Endothelial cell of umbilical vein (primary cell): ENCODE measurements at regions of chr2 and their contacts with region 1.

Region 1: GRCh38 chr2:35503715-35504180 is 851.8 kb upstream of the CRIM1 start:
- DNase-seq: peak; percentile 96
- H3K4me3 ChIP-seq: peak overlapping the region in 1 of 3 experiments; percentile 59
- H3K27ac ChIP-seq: peak overlapping the region; percentile 91
- H3K4me1 ChIP-seq: peaks cover 42% of the 10 kb centered on the region
- H3K27me3 ChIP-seq: no peaks in the 10 kb centered on the region
- CTCF ChIP-seq: no peak
- POLR2A ChIP-seq: peak; percentile 63

Region 2: GRCh38 chr2:34105015-34105767 is 1398.6 kb before region 1 on chr2:
- CTCF ChIA-PET with region 1: no interaction called
- POLR2A ChIA-PET with region 1: no interaction called
- dilution Hi-C with region 1: no loop called
- intact Hi-C with region 1: loop called (anchors 5 kb)
- DNase-seq: peak; percentile 83
- H3K4me3 ChIP-seq: peak overlapping the region in 2 of 3 experiments; percentile 16 to 51
- H3K27ac ChIP-seq: peak overlapping the region; percentile 95
- H3K4me1 ChIP-seq: peaks cover 39% of the 10 kb centered on the region
- H3K27me3 ChIP-seq: no peaks in the 10 kb centered on the region
- CTCF ChIP-seq: no peak
- POLR2A ChIP-seq: no peak

Region 3: DNA sequence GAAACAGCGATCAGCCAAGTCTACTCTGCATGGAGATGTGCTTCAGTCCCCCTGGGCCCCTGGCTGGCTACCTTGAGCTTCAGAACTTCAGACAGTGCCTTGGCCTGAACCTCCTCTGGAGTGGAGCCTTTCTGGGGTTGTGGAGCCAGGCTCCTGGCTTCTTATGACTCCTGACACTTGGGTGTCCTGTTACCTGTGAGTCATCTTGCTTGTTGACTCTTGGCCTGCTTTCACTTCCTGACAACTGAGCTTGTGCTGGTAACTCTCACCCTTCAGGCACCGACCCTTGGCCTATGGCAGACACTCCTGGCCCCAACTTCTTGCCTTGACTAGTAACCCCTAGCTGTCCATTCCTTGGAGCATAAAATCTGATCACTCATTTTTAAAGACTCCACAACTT is 1146.3 kb after region 1 on chr2:
- CTCF ChIA-PET with region 1: no interaction called
- POLR2A ChIA-PET with region 1: no interaction called
- dilution Hi-C with region 1: no loop called
- intact Hi-C with region 1: loop called (anchors 10 kb)
- DNase-seq: peak; percentile 45
- H3K4me3 ChIP-seq: no peak overlapping the region
- H3K27ac ChIP-seq: peak overlapping the region; percentile 24
- H3K4me1 ChIP-seq: peaks cover 15% of the 10 kb centered on the region
- H3K27me3 ChIP-seq: no peaks in the 10 kb centered on the region
- CTCF ChIP-seq: no peak
- POLR2A ChIP-seq: no peak